ENCODE measurements at regions of chr18 and their contacts with region 1.

Region 1: GRCh38 chr18:63016270-63016669 is 300.9 kb downstream of the PHLPP1 start:
- DNase-seq: peak; percentile 64
- ATAC-seq: peak; percentile 64
- H3K4me3 Mint-ChIP-seq: no peak overlapping the region
- H3K27ac Mint-ChIP-seq: no peak overlapping the region
- H3K4me1 Mint-ChIP-seq: no peaks in the 10 kb centered on the region
- H3K27me3 Mint-ChIP-seq: peaks cover 13% of the 10 kb centered on the region

Region 2: GRCh38 chr18:62973689-62974088 is 42.6 kb before region 1 on chr18:
- CTCF ChIA-PET with region 1: no interaction called
- POLR2A ChIA-PET with region 1: no interaction called
- intact Hi-C with region 1: no loop called
- DNase-seq: no peak
- ATAC-seq: no peak
- H3K4me3 Mint-ChIP-seq: no peak overlapping the region
- H3K27ac Mint-ChIP-seq: no peak overlapping the region
- H3K4me1 Mint-ChIP-seq: no peaks in the 10 kb centered on the region
- H3K27me3 Mint-ChIP-seq: no peaks in the 10 kb centered on the region

Region 3: DNA sequence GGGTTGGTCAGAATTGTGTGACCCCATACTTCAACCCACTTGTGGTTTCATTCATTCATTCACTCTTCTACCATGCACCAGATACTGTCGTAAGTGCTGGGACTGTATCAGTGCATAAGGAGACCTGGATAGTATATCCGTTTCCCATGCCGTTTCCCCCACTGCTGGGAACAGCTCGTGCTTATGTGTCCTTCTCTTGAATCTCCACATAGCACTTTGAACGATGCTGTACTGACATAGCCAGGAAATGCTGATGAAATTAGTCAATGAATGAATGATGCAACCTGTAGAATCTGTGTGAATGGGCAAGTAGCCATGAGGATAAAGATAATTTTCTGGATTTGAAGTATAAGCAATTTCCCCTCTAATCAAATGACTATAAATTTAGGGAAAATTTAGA is 27.2 kb after region 1 on chr18:
- CTCF ChIA-PET with region 1: interaction called, 10 read pairs
- POLR2A ChIA-PET with region 1: no interaction called
- intact Hi-C with region 1: no loop called
- DNase-seq: no peak
- ATAC-seq: no peak
- H3K4me3 Mint-ChIP-seq: no peak overlapping the region
- H3K27ac Mint-ChIP-seq: no peak overlapping the region
- H3K4me1 Mint-ChIP-seq: peaks cover 25% of the 10 kb centered on the region
- H3K27me3 Mint-ChIP-seq: peaks cover 4% of the 10 kb centered on the region

Region 4: DNA sequence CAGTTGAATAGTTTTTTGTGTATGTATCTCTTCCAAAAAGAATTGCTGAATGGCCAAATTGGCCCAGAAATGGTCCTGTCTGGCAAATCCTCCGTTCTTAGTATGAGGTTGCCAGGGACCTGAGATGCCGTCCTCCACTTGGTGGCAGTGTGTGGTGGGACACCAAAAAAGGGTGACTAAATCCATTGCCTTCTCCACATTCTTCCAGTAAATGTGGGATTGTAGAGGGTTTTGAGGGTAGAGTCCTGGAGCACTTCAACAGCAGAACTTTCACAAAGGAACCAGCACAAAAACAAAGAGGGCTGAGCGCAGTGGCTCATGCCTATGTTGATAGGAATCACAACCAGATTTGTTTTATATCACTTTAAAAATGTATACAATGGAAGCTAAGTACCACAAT is 103.4 kb after region 1 on chr18:
- CTCF ChIA-PET with region 1: interaction called, 15 read pairs
- POLR2A ChIA-PET with region 1: no interaction called
- intact Hi-C with region 1: loop called in 1 of 2 experiments (anchors 10 kb)
- DNase-seq: peak; percentile 59
- ATAC-seq: peak; percentile 69
- H3K4me3 Mint-ChIP-seq: no peak overlapping the region
- H3K27ac Mint-ChIP-seq: no peak overlapping the region
- H3K4me1 Mint-ChIP-seq: peaks cover 4% of the 10 kb centered on the region
- H3K27me3 Mint-ChIP-seq: no peaks in the 10 kb centered on the region

Region 5: DNA sequence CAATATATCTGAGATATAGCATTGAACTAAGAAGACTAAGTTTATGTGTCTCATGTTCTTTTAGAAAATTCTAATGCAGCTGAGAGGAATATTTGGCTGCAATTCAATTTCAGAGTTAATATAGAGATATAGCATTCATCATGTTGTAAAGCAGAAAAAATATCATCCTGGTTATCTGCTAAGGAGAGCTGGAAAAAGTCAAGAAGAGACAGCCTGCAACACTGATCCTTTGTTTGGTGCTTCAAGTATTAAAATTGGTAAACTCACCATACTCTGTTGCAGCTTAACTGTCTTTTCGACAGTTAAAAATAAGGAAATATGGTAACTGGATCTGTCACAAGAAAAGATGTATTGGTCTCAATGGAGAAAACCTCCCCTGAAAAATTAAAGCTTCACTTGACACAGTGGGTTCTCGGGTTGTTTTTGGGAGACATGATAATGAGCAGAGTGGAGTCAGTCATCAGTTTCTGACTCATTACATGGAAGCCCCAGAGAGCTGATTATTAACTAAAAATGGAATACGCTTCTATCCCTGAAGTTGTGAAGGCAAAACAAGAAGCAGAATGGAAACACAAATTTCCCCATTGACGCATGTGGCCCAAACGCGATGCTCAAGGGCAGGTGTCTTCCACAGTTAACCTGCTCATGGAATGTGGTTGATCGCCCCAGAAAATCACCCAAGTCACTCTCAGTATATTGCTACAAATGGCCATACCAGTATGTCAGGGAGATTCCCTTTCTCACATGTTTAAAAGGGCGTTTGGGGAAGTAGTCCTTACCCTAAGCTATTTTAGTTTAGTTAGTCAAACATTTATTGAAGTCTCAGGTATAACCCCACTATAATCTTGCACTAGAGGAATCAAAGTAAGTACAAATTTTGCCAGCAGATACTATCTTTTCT is 295.1 kb after region 1 on chr18:
- CTCF ChIA-PET with region 1: interaction called, 10 read pairs
- POLR2A ChIA-PET with region 1: no interaction called
- intact Hi-C with region 1: no loop called
- DNase-seq: no peak
- ATAC-seq: no peak
- H3K4me3 Mint-ChIP-seq: no peak overlapping the region
- H3K27ac Mint-ChIP-seq: peak overlapping the region; percentile 7
- H3K4me1 Mint-ChIP-seq: peaks cover 82% of the 10 kb centered on the region
- H3K27me3 Mint-ChIP-seq: no peaks in the 10 kb centered on the region

Region 6: DNA sequence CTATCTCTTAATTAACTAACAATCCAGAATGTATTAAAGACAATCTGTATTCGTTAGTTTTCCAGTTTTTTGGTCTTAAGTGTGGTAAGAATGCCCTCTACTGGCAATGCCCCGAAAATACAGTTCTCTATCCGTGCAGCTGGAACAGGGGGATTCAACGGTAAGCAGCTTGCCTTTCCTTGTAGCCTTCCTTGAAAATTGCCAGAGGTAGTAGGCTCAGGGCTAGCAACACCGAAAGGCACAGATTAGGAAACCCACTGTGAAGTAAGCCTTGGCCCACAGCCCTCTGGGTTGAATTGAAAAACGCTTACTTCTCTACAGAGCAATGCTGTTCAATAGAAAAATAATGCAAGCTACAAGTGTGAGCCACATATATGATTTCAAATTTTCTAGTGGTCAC is 423.1 kb after region 1 on chr18:
- CTCF ChIA-PET with region 1: interaction called, 46 read pairs
- POLR2A ChIA-PET with region 1: no interaction called
- intact Hi-C with region 1: loop called (anchors 1 to 2 kb)
- DNase-seq: peak; percentile 56
- ATAC-seq: peak; percentile 36
- H3K4me3 Mint-ChIP-seq: no peak overlapping the region
- H3K27ac Mint-ChIP-seq: no peak overlapping the region
- H3K4me1 Mint-ChIP-seq: no peaks in the 10 kb centered on the region
- H3K27me3 Mint-ChIP-seq: peaks cover 3% of the 10 kb centered on the region

Measured in activated CD4-positive, alpha-beta T cell treated with anti-CD3 and anti-CD28 coated beads for 36 hours (primary cell).